Head of caudate nucleus (tissue), 42 donors: ENCODE measurements at regions of chr1 and their contacts with region 1.

Region 1: DNA sequence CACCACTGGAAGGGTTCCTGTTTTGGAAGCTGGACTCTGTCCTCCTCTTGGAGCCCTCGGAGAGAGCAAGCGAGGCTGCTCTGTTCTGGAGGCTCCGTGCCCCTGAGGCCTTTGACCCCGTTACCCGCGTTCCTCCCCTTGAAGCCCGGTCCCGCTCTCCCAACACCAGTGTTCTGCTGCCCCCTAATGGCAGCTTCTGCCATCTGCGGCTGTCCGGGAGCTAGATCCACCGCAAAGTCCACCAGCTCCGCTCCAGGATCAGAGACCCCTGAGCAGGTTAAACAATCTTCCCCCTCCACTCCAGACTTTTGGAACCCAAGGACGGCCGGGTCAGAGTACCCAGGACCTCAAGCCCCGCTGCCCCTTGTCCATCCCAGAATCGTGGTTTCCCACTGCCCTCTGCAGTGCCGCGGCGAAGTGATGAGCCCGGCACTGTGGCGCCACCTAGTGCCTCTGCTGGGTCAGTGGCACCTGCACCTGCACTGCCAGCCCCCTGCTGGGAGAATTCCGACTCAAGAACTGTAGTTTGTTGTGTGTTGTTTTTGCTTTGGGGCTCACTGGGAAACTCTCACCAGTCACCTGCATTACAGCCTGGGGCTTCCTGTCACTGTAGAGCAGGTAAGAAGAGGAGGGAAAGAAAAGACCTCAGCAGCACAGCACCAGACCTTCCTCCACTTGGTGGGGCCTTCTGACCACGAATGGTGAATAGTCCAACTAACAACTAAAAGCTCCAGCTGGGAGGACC is 63.5 kb upstream of the NFASC start:
- DNase-seq: peak; percentile 78 to 95 (median 88)

Region 2: DNA sequence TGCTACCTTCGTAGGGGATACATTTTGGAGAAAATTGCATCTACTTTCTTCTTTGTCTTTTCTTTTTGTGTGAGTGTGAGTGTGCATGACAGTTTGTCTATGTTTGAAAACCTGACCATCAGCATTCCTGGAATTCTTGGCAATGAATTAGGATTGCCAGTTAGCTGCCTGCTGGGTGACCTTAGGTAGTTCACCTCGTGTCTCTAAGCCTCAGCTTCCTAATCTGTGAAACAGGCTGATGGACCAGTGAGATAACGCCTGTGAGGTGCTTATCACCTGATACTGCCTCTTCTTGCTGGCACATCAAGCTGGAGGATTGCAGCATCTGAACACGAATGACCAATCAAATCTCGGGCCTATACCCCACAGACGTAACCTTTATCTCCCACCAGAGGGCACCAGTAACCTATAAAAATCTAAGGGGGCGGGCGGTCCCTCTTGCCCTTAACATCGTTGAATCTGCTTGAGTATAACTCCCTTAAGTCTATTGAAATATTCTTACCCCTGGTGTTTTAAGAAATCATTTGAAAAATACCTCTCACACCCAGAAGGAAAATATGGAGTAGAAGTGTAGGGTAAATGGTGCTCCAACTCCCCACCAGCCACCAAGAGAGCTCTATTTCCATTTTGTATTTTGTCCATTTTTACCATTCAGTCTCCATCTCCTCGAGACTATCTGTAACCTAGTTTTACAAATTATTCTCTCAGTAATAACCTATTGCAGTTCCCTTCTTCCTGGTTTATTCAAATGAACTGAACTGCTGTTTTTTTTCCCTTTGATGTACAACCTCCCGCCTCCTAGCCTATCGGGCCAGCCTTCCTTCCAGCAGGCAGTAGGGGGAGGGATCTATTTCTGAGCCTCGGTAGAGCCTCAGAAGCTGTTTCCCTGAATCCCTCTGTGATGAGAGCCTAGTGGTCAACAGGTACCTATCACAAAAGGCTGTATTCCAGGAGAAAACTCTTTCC is 241.2 kb before region 1 on chr1:
- intact Hi-C with region 1: loop called (anchors 5 kb)
- DNase-seq: peak; percentile 26 to 85 (median 64)

Region 3: DNA sequence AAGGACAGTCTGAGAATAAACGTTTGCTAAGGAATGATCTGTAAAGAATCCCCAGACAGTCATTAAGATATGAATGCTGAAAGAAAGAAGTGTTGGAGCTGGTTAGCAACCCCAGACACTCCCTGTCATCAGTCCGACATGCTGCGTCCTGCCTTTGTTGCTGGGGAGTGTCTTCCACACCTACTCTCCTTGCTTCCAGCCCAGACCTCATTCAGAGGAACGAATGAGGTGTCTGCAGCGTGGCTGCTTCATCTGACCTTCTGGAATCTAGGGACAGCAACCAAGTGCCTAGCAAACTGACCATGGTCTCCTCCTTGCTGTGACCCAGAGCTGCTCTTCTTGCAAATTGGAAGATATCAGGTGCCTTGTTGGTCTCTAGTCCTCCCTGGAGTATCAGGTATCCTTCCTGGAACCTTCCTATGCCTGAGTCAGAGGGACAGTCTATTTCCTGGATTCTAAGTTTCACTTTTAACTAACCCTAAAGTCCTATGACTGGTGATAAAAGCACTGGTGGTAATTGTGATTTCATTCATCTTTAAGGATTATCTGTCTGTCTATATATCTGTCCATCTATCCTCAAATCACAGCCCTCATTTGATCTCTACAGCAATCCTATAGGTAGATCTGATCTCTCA is 108.9 kb after region 1 on chr1:
- intact Hi-C with region 1: no loop called
- DNase-seq: peak in 1 of 42 donors; percentile 38